CD8-positive, alpha-beta T cell (primary cell): ENCODE measurements at regions of chr6 and their contacts with region 1.

Region 1: DNA sequence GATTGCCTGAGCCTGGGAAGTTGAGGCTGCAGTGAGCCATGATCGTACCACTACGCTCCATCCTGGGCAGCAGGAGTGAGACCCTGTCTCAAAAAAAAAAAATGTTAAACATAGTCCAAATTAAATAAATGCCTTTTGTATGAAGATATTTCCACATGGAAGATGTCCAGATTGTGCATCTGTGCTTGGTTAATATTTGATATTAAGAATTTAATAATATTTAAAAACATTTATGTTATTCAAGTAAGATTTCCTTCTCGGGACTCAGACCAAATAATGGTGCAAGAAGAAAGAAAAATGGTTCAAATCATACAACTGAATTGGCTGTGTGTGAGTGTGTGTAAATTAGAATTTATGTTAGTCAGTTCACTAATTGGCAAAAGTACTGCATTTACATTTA is 202.5 kb downstream of the TBC1D7 start:
- DNase-seq: no peak
- ATAC-seq: no peak
- H3K4me3 ChIP-seq: no peak overlapping the region
- H3K4me3 Mint-ChIP-seq: no peak overlapping the region
- H3K27ac ChIP-seq: no peak overlapping the region
- H3K27ac Mint-ChIP-seq: no peak overlapping the region
- H3K4me1 ChIP-seq: no peaks in the 10 kb centered on the region
- H3K4me1 Mint-ChIP-seq: no peaks in the 10 kb centered on the region
- H3K27me3 ChIP-seq: no peaks in the 10 kb centered on the region
- H3K27me3 Mint-ChIP-seq: peaks cover 15% of the 10 kb centered on the region
- CTCF ChIP-seq: no peak

Region 2: GRCh38 chr6:12941422-12941821 is 184.4 kb before region 1 on chr6:
- CTCF ChIA-PET with region 1: no interaction called
- POLR2A ChIA-PET with region 1: no interaction called
- intact Hi-C with region 1: no loop called
- DNase-seq: no peak
- ATAC-seq: no peak
- H3K4me3 ChIP-seq: no peak overlapping the region
- H3K4me3 Mint-ChIP-seq: no peak overlapping the region
- H3K27ac ChIP-seq: no peak overlapping the region
- H3K27ac Mint-ChIP-seq: no peak overlapping the region
- H3K4me1 ChIP-seq: peaks cover 6% of the 10 kb centered on the region
- H3K4me1 Mint-ChIP-seq: peaks cover 5% of the 10 kb centered on the region
- H3K27me3 ChIP-seq: no peaks in the 10 kb centered on the region
- H3K27me3 Mint-ChIP-seq: peaks cover 8% of the 10 kb centered on the region
- CTCF ChIP-seq: no peak

Region 3: GRCh38 chr6:13089296-13089994 is 36.4 kb before region 1 on chr6:
- CTCF ChIA-PET with region 1: no interaction called
- POLR2A ChIA-PET with region 1: no interaction called
- intact Hi-C with region 1: loop called in 1 of 2 experiments (anchors 1 kb)
- DNase-seq: no peak
- ATAC-seq: no peak
- H3K4me3 ChIP-seq: no peak overlapping the region
- H3K4me3 Mint-ChIP-seq: no peak overlapping the region
- H3K27ac ChIP-seq: no peak overlapping the region
- H3K27ac Mint-ChIP-seq: no peak overlapping the region
- H3K4me1 ChIP-seq: no peaks in the 10 kb centered on the region
- H3K4me1 Mint-ChIP-seq: no peaks in the 10 kb centered on the region
- H3K27me3 ChIP-seq: no peaks in the 10 kb centered on the region
- H3K27me3 Mint-ChIP-seq: no peaks in the 10 kb centered on the region
- CTCF ChIP-seq: no peak